Vagina (tissue), 2 donors: ENCODE measurements at regions of chr6 and their contacts with region 1.

Region 1: GRCh38 chr6:44096612-44097011 is 30.6 kb downstream of the MRPL14 start:
- DNase-seq: no peak
- H3K4me3 ChIP-seq: no peak overlapping the region
- H3K27ac ChIP-seq: no peak overlapping the region
- H3K4me1 ChIP-seq: no peaks in the 10 kb centered on the region
- H3K27me3 ChIP-seq: no peaks in the 10 kb centered on the region
- CTCF ChIP-seq: peak; percentile 68 to 81 (median 70)
- POLR2A ChIP-seq: no peak

Region 2: GRCh38 chr6:43758617-43759050 is 338.0 kb before region 1 on chr6:
- intact Hi-C with region 1: no loop called
- DNase-seq: no peak
- H3K4me3 ChIP-seq: no peak overlapping the region
- H3K27ac ChIP-seq: no peak overlapping the region
- H3K4me1 ChIP-seq: peaks cover 26% of the 10 kb centered on the region
- H3K27me3 ChIP-seq: no peaks in the 10 kb centered on the region
- CTCF ChIP-seq: peak in 1 of 3 experiments; percentile 36
- POLR2A ChIP-seq: no peak

Region 3: GRCh38 chr6:44151348-44152108 is 54.9 kb after region 1 on chr6:
- intact Hi-C with region 1: loop called (anchors 5 kb)
- DNase-seq: no peak
- H3K4me3 ChIP-seq: no peak overlapping the region
- H3K27ac ChIP-seq: no peak overlapping the region
- H3K4me1 ChIP-seq: peaks cover 7% of the 10 kb centered on the region
- H3K27me3 ChIP-seq: no peaks in the 10 kb centered on the region
- CTCF ChIP-seq: peak; percentile 98 to 99 (median 99)
- POLR2A ChIP-seq: no peak

Region 4: GRCh38 chr6:44327096-44327495 is 230.5 kb after region 1 on chr6:
- intact Hi-C with region 1: loop called (anchors 10 kb)
- DNase-seq: no peak
- H3K4me3 ChIP-seq: no peak overlapping the region
- H3K27ac ChIP-seq: no peak overlapping the region
- H3K4me1 ChIP-seq: no peaks in the 10 kb centered on the region
- H3K27me3 ChIP-seq: no peaks in the 10 kb centered on the region
- CTCF ChIP-seq: no peak
- POLR2A ChIP-seq: no peak